ENCODE measurements at regions of chr14 and their contacts with region 1.

Region 1: DNA sequence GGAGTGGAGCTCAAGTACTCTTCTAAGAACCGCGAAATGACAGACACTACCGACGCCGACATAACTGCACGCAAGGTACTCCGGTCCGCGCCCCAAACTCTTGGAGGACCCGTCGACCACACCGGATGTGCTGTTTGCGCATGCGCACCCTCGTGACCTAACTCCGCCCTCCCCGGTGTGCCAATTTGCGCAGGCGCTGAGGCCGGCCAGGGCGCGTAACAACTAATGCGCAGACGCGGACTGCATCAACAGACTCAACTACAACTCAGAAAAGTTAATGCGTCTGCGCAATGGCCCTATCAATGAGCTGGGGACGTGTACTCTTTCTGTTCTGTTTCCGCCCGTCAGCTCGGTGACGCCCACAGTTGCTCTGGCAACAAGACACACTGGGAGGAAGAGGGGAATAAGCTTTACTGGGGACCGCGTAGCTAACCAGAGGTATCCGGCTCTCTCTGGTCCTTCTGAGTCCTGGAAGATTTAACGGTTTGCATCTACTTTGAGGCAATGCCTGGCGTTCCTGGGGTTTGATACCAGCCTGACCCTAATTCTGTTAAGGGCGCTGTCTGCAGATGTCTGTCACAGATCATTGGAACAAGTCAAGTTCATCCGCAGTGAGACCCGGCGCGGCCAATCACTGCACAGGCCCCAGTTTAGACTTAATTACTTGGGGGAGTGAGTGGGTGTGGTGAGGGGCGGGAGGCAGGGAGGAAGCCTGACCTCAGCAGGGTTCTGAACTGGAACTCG is at the start of gene DAD1:
- DNase-seq: peak; percentile 100
- H3K4me3 Mint-ChIP-seq: peak within 1 kb of the TSS; percentile 93
- H3K27ac Mint-ChIP-seq: peak within 1 kb of the TSS; percentile 98
- H3K4me1 Mint-ChIP-seq: peaks cover 55% of the 10 kb centered on the region
- H3K27me3 Mint-ChIP-seq: peaks cover 6% of the 10 kb centered on the region
- total RNA-seq, gene DAD1: 160 to 167 TPM

Region 2: GRCh38 chr14:22579236-22579635 is 10.0 kb before region 1 on chr14:
- CTCF ChIA-PET with region 1: interaction called, 162 read pairs
- POLR2A ChIA-PET with region 1: interaction called, 103 read pairs
- DNase-seq: no peak
- H3K4me3 Mint-ChIP-seq: no peak overlapping the region
- H3K27ac Mint-ChIP-seq: peak overlapping the region; percentile 41
- H3K4me1 Mint-ChIP-seq: peaks cover 63% of the 10 kb centered on the region
- H3K27me3 Mint-ChIP-seq: no peaks in the 10 kb centered on the region

Region 3: GRCh38 chr14:22653012-22653621 is 63.8 kb after region 1 on chr14:
- CTCF ChIA-PET with region 1: interaction called, 12 read pairs
- POLR2A ChIA-PET with region 1: interaction called, 4 read pairs
- DNase-seq: peak; percentile 54
- H3K4me3 Mint-ChIP-seq: no peak overlapping the region
- H3K27ac Mint-ChIP-seq: no peak overlapping the region
- H3K4me1 Mint-ChIP-seq: no peaks in the 10 kb centered on the region
- H3K27me3 Mint-ChIP-seq: no peaks in the 10 kb centered on the region

Region 4: DNA sequence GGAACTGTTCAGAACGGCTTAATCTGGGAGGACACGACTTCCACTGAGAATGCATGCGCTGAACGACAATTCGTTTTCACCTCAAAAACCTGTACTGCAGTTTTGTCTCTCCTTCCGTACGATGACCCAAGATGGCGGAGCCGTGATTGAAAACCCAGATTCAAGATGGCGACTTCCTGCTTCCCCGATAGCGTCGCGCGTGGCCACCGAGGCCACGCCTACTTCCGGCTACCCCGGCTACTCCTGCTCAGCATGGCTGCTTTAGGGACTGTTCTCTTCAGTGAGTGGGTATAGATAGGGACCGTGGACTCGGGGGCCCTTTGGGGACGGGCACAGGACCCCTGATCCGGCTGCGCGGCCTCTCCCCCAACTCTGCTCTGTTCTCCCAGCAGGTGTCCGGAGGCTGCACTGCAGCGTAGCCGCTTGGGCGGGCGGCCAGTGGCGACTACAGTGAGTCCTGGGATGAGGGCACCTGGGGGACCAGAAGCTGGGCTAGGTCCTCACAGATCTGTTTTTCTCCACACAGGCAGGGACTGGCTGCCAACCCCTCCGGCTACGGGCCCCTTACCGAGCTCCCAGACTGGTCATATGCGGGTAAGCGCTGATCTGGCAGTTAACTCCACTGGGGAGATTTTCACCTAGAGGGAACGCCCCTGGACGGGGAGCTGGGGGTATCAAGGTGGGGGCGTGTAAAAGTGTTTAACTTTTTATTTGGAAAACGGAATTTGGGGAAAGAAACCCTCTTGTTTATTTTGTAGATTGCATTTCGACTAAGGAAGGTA is 240.6 kb after region 1 on chr14 and contains the start of gene MRPL52:
- CTCF ChIA-PET with region 1: interaction called, 5 read pairs
- POLR2A ChIA-PET with region 1: interaction called, 11 read pairs
- DNase-seq: peak; percentile 93
- H3K4me3 Mint-ChIP-seq: peak within 1 kb of the TSS; percentile 87
- H3K27ac Mint-ChIP-seq: peak within 1 kb of the TSS; percentile 90
- H3K4me1 Mint-ChIP-seq: peaks cover 33% of the 10 kb centered on the region
- H3K27me3 Mint-ChIP-seq: no peaks in the 10 kb centered on the region
- total RNA-seq, gene MRPL52: 108 to 119 TPM

Measured in activated CD4-positive, alpha-beta memory T cell treated with anti-CD3 and anti-CD28 coated beads, Interleukin-2, amount 10 ng/mL, durations not matched to agents 7 days and 5 days (primary cell).